Left colon (tissue), 2 donors: ENCODE measurements at regions of chr6 and their contacts with region 1.

Region 1: GRCh38 chr6:30399390-30400058 is 54.6 kb downstream of the RPP21 start:
- DNase-seq: no peak
- ATAC-seq: peak; percentile 85

Region 2: GRCh38 chr6:30259140-30260035 is 140.1 kb before region 1 on chr6:
- intact Hi-C with region 1: no loop called
- DNase-seq: peak; percentile 48 to 69
- ATAC-seq: peak; percentile 97

Region 3: DNA sequence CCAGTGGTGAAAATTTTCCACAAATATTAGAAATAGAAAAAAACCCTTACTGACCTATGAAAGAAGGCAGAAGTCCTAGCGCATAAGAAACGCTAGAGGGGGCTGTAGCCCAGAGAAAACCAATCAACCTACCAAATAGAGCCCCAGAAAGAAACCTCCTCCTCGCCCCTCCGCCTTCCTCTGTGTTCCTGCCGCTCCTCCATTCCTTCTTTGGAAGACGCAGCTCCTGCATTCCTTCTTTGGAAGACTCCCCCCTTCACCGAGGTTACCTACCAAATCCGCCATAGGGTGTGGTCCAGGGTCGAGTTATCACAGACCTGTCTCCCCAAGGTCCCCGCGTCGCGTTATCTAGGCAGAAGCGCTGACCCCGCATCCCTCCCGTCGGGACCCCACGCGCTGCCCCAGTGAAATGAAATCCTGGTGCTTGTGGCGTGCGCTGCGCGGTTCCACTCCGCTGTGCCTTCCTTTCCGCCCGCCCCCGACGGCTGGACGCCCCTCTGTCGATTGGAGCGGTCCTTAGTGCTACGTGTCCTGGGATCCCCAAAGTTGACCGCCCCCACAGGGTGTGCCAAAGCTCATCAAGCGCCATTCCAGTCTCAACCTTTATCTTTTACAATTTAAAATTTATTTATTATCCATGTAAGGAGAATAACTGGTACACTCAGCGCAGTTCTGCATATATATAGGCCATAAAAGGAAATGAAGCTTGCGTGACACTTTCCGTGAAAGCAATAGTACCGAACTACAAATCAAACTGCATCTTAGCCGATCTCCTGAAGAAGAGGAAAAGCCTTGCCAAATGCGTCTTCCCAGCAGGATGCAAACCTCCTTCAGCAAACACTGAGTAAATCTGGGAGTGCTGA is 41.6 kb before region 1 on chr6:
- intact Hi-C with region 1: loop called in 1 of 2 experiments (anchors 2 kb)
- DNase-seq: peak; percentile 41 to 57
- ATAC-seq: peak; percentile 70

Region 4: GRCh38 chr6:30489081-30490025 is 89.8 kb after region 1 on chr6 and contains the start of gene HLA-E:
- intact Hi-C with region 1: no loop called
- DNase-seq: peak; percentile 90 to 97
- ATAC-seq: peak; percentile 94
- total RNA-seq, gene HLA-E: 332 to 370 TPM

Region 5: DNA sequence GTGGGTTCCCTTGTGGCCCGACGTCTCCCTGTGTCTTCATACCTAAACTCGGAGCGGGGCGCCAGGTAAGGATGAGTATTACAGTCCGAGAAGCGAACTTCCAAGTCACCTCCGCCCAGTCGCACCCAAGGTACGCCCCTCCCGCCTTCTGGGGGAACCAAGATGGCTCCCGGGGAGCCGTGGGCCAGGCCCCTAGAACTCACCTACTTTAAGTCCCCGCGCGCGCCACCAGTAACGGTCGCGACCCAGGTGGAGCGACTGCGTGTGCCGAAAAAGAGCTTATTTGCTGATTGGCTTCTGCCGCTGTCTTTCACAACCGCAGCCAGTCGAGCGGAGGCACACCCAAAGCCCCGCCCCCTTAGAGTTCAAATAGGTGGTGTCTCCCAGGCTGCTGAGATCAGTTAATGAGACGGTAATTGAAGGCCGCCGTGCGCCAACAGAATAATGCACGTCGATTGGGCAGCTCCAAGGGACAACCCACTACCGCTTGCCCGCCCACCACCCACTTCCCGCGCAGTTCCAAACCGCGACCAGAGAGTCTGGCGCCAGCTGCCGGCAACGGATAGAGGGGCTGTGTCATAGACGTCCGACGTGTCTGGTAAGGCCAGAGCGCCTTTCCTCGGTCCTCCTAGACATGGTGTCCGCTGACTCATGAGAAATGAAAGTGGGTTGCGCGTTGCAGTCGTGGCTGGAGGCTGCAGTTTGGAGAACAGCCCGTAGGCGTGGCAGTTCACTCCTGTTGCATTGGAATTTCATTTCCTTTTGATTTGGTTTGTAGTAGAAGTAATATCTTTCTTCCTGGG is 317.7 kb after region 1 on chr6 and contains the start of gene MDC1:
- intact Hi-C with region 1: no loop called
- DNase-seq: peak; percentile 98 to 100
- ATAC-seq: peak; percentile 73
- total RNA-seq, gene MDC1: 11.1 to 16.3 TPM